ENCODE measurements at regions of chr1 and their contacts with region 1.

Region 1: DNA sequence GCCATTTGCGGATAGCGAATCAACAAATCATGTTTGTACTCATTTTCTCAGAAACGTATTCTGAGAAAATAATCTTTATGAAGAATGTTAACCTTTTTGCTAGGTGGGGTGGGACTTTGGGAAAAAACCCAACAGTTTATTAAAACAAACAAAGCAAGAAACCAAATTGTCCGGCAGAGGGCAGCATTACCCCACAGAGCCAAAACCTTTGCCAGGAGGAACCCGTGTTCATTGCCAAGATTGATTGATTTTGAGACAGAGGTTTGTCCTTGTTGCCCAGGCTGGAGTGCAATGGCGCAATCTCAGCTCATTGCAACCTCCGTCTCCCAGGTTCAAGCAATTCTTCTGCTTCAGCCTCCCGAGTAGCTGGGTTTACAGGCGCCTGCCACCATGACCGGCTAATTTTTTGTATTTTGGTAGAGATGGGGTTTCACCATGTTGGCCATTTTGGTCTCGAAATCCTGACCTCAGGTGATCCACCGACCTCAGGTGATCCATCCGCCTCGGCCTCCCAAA is 70.8 kb upstream of the RHOU start:
- DNase-seq: peak; percentile 70 to 86 (median 81)
- H3K4me3 ChIP-seq: no peak overlapping the region
- H3K27ac ChIP-seq: no peak overlapping the region
- H3K4me1 ChIP-seq: no peaks in the 10 kb centered on the region
- H3K27me3 ChIP-seq: no peaks in the 10 kb centered on the region
- CTCF ChIP-seq: peak; percentile 85 to 86 (median 86)
- EP300 ChIP-seq: no peak
- POLR2A ChIP-seq: no peak

Region 2: DNA sequence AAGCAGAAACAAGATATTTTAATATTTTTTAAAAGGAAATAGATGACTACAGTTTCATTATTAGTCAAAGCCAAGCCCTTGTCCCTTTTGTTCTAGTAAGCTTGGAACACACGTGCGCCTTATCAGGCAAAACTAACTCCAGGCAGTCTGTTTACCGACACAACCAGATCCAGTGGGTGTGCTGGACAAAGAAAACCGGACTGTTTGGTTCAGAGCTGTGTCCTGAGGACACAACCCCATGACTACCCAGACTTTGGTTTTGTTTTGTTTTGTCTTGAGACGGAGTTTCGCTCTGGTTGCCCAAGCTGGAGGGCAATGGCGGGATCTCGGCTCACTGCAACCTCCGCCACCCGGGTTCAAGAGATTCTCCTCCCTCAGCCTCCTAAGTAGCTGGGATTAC is 56.9 kb after region 1 on chr1:
- intact Hi-C with region 1: no loop called
- DNase-seq: no peak
- H3K4me3 ChIP-seq: no peak overlapping the region
- H3K27ac ChIP-seq: no peak overlapping the region
- H3K4me1 ChIP-seq: no peaks in the 10 kb centered on the region
- H3K27me3 ChIP-seq: no peaks in the 10 kb centered on the region
- CTCF ChIP-seq: no peak
- EP300 ChIP-seq: no peak
- POLR2A ChIP-seq: no peak

Region 3: GRCh38 chr1:229227298-229227919 is 563.0 kb after region 1 on chr1:
- intact Hi-C with region 1: loop called in 1 of 4 experiments (anchors 10 kb)
- DNase-seq: peak; percentile 82 to 92 (median 88)
- H3K4me3 ChIP-seq: no peak overlapping the region
- H3K27ac ChIP-seq: no peak overlapping the region
- H3K4me1 ChIP-seq: peaks cover 10% of the 10 kb centered on the region
- H3K27me3 ChIP-seq: no peaks in the 10 kb centered on the region
- CTCF ChIP-seq: peak; percentile 79 to 87 (median 84)
- EP300 ChIP-seq: no peak
- POLR2A ChIP-seq: no peak

Region 4: DNA sequence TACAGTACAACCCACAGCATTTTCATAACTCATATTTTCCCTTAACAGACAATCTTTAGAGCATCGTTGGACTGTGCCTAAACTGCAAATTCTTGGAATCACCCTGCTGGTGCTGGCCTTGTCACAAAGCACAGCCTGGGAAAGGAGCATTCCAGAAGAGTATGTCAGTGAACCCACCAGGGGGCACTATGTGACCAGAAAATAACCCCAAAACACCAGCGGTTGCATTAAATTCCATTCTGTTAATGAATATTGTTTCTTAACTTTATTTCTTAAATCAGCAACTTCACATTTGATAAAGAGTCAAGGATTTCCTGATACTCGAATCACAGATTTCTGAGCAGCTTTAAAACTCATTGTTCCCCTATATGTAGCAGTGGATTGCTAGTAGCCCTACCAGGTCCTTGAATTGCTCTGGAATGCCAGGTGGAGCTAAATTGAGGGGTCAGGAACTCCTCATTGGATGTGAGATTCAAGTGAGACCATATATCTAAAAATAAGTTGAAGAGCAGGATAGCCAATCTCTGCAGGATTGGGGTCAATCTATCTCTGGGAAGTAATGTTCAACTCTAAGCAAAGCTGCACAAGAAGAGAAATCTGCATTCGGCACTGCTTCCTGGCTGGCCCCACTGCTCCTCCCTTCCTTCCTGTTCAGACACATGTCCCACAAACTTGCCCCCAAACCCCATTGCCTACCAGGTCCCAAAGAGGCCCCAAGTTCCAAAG is 593.7 kb after region 1 on chr1:
- intact Hi-C with region 1: loop called in 3 of 4 experiments (anchors 5 to 10 kb)
- DNase-seq: peak; percentile 56 to 74 (median 61)
- H3K4me3 ChIP-seq: no peak overlapping the region
- H3K27ac ChIP-seq: no peak overlapping the region
- H3K4me1 ChIP-seq: no peaks in the 10 kb centered on the region
- H3K27me3 ChIP-seq: no peaks in the 10 kb centered on the region
- CTCF ChIP-seq: peak; percentile 48 to 89 (median 82)
- EP300 ChIP-seq: no peak
- POLR2A ChIP-seq: no peak

Region 5: GRCh38 chr1:229479660-229480399 is 815.4 kb after region 1 on chr1:
- intact Hi-C with region 1: loop called in 1 of 4 experiments (anchors 10 kb)
- DNase-seq: no peak
- H3K4me3 ChIP-seq: no peak overlapping the region
- H3K27ac ChIP-seq: no peak overlapping the region
- H3K4me1 ChIP-seq: no peaks in the 10 kb centered on the region
- H3K27me3 ChIP-seq: no peaks in the 10 kb centered on the region
- CTCF ChIP-seq: no peak
- EP300 ChIP-seq: no peak
- POLR2A ChIP-seq: no peak

Measured in ovary (tissue), 10 donors.